Upper lobe of right lung (tissue), 1 donor: ENCODE measurements at regions of chr11 and their contacts with region 1.

Region 1: GRCh38 chr11:74449369-74449931 is 17.9 kb downstream of the KCNE3 start:
- DNase-seq: no peak
- ATAC-seq: peak; percentile 89
- H3K4me3 ChIP-seq: no peak overlapping the region
- H3K27ac ChIP-seq: no peak overlapping the region
- H3K4me1 ChIP-seq: no peaks in the 10 kb centered on the region
- H3K27me3 ChIP-seq: no peaks in the 10 kb centered on the region
- CTCF ChIP-seq: peak; percentile 77

Region 2: DNA sequence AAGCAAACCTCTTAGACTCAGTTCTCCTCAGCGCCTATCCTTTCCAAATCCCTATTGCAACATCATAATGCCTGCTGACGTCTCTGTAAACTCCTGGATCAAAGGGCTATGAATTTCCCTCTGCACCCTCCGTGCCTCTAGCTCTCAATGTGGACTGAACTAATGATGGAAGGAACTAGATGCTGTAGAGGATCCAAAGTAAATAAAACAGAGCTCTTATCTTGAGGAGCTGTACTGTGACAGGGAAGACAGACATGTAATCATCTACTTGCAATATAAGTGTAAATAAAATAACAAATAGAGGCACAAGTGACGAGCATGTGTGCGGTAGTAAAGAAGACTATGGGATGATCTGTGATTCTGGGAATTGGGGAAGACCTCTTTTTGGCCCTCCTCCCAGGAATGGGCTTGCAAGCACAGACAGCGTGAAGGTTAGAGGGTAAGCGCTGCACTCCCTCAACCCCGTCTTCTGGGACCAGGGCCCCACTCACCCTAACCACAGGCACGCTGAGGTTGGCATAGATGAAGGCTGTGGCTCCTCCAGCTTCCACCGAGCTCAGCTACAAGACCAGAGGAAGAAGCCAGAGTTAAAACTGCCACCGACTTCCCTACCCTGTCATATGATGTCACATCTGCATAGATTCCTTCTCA is 180.2 kb before region 1 on chr11:
- intact Hi-C with region 1: loop called (anchors 10 kb)
- DNase-seq: no peak
- ATAC-seq: peak; percentile 41
- H3K4me3 ChIP-seq: no peak overlapping the region
- H3K27ac ChIP-seq: no peak overlapping the region
- H3K4me1 ChIP-seq: peaks cover 5% of the 10 kb centered on the region
- H3K27me3 ChIP-seq: no peaks in the 10 kb centered on the region
- CTCF ChIP-seq: no peak

Region 3: GRCh38 chr11:74388678-74389327 is 60.6 kb before region 1 on chr11:
- intact Hi-C with region 1: loop called (anchors 10 kb)
- DNase-seq: no peak
- ATAC-seq: peak; percentile 89
- H3K4me3 ChIP-seq: no peak overlapping the region
- H3K27ac ChIP-seq: no peak overlapping the region
- H3K4me1 ChIP-seq: no peaks in the 10 kb centered on the region
- H3K27me3 ChIP-seq: no peaks in the 10 kb centered on the region
- CTCF ChIP-seq: peak; percentile 84

Region 4: DNA sequence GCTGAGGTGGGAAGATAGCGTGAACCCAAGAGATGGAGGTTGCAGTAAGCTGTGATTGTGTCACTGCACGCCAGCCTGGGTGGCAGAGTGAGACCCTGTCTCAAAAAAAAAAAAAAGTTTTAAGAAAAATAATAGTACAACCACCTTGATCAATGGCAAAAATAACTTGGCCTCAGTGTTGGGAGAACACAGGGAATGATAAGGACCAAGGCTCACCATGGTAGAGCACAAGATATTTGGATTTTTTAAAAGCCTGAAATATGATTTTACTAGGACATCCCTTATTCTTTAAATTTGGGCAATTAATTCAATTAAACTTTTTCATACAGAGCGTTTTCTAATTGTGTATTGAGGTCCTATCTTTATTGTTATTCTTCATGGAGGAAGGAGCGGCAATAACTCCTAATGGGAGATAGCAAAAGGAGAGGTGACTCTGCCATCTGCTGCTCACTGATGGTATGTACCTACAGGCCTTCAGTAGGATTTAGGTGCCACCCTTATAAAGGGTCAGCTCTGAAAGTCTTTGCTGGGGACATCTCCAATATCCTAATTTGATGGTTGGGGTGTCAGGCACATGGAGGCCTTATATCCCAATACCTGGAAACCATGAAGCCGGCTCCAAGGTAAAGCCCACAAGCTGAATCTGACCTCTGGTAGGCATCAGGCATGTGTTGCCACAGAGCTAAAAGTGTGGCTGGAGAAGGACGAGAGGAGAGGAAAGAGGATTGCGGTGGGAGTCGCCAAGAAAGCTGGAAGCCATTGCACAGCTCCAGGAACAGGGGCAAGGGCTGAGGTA is 121.0 kb after region 1 on chr11:
- intact Hi-C with region 1: loop called (anchors 5 kb)
- DNase-seq: no peak
- ATAC-seq: peak; percentile 97
- H3K4me3 ChIP-seq: no peak overlapping the region
- H3K27ac ChIP-seq: no peak overlapping the region
- H3K4me1 ChIP-seq: no peaks in the 10 kb centered on the region
- H3K27me3 ChIP-seq: no peaks in the 10 kb centered on the region
- CTCF ChIP-seq: peak; percentile 77

Region 5: DNA sequence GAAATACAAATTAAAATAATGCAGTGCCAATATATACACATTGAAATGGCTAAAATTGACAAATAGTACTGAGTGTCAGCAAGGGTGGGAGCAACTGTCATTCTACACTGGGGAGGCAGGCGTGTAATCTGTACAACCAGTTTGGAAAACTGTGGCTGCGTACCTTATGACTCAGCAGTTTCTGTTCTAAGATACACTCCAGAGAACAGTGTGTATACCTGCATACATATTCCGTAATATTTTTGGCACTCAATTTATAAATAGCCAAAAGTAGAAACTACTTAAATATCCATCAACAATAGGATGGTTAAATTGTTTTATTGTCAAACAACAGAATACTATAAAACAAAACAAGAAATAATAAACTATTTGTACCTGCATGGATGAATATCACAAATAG is 356.8 kb after region 1 on chr11:
- intact Hi-C with region 1: no loop called
- DNase-seq: no peak
- ATAC-seq: peak; percentile 39
- H3K4me3 ChIP-seq: no peak overlapping the region
- H3K27ac ChIP-seq: no peak overlapping the region
- H3K4me1 ChIP-seq: peaks cover 23% of the 10 kb centered on the region
- H3K27me3 ChIP-seq: no peaks in the 10 kb centered on the region
- CTCF ChIP-seq: no peak